Activated naive CD4-positive, alpha-beta T cell treated with anti-CD3 and anti-CD28 coated beads, Interleukin-2, amount 10 ng/mL, durations not matched to agents 7 days and 5 days (primary cell): ENCODE measurements at regions of chr6 and their contacts with region 1.

Region 1: GRCh38 chr6:16964553-16965501 is 137.0 kb upstream of the STMND1 start:
- DNase-seq: peak; percentile 71
- H3K4me3 Mint-ChIP-seq: no peak overlapping the region
- H3K27ac Mint-ChIP-seq: no peak overlapping the region
- H3K4me1 Mint-ChIP-seq: peaks cover 3% of the 10 kb centered on the region
- H3K27me3 Mint-ChIP-seq: peaks cover 21% of the 10 kb centered on the region

Region 2: DNA sequence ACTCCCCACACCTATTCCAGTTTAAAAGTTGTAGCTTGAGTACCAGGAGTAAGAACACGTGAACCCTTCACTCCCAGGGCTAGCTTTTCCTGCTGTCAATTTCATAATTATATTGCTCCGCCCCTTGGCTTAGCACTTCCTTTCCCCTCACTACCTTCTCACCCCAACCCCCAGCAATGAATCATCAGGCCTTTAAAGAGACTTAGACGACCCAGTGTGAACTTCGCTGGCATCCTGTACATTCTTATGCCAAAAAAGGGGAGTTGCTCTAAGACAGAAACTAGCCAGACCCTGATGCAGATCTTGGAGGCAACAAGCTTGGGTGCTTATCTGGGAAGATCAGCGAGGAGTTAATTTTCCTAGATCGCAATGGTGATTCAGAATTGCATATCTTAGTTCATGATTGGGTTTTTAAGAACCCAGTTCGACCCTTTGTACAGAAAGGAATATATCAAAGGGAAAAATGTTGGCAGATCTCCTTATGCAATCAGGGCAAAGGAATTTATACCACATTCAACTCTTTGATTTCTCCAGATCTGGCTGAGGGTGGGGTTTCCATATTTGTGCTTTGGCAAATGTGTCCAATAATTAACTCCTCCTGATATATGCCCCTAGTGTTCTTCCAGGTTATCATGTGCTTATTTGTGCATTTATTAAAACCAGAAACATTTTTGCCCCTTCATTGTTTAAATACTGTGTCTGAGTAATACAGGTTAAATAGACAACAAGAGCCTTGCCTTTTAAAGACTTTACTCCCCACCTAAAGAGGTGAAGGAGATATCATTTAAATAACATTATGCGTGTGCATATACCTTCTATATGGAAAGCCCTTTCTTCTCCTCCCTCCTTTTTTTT is 195.5 kb before region 1 on chr6:
- CTCF ChIA-PET with region 1: interaction called, 31 read pairs
- DNase-seq: peak; percentile 74
- H3K4me3 Mint-ChIP-seq: no peak overlapping the region
- H3K27ac Mint-ChIP-seq: peak overlapping the region; percentile 33
- H3K4me1 Mint-ChIP-seq: peaks cover 69% of the 10 kb centered on the region
- H3K27me3 Mint-ChIP-seq: peaks cover 4% of the 10 kb centered on the region

Region 3: GRCh38 chr6:16933532-16933931 is 31.3 kb before region 1 on chr6:
- CTCF ChIA-PET with region 1: no interaction called
- DNase-seq: no peak
- H3K4me3 Mint-ChIP-seq: no peak overlapping the region
- H3K27ac Mint-ChIP-seq: no peak overlapping the region
- H3K4me1 Mint-ChIP-seq: no peaks in the 10 kb centered on the region
- H3K27me3 Mint-ChIP-seq: peaks cover 13% of the 10 kb centered on the region

Region 4: DNA sequence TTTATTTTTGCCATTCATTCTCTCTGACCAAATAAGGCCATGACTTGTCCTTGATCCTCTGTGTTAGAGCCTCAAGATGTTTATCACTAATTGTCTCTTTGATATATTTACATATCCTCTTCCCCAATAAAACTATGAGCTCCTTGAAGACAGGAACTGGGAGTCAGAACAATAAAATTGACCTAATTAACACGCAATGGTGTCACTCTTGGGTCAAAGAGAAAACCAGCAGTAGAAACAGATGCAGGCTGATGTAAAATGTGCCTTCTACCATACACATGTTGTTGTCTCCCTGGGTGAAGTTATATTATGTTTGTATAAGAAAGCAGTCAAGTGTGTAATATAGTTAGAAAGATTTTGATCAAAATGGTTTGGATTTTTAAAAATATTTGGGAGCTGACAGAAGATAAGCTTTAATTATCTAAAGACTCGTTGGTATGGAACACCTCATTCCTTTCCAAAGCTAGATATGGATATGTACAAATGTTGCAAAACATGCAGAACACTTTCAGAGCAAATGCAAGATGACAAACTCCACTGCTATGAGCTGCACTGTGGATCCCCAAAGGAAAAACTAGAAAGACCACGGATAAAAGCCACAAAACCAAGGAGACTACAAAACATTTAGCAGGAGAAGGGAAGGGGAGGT is 27.3 kb after region 1 on chr6:
- CTCF ChIA-PET with region 1: no interaction called
- DNase-seq: no peak
- H3K4me3 Mint-ChIP-seq: no peak overlapping the region
- H3K27ac Mint-ChIP-seq: no peak overlapping the region
- H3K4me1 Mint-ChIP-seq: no peaks in the 10 kb centered on the region
- H3K27me3 Mint-ChIP-seq: peaks cover 7% of the 10 kb centered on the region

Region 5: GRCh38 chr6:17138033-17138432 is 173.2 kb after region 1 on chr6:
- CTCF ChIA-PET with region 1: no interaction called
- DNase-seq: no peak
- H3K4me3 Mint-ChIP-seq: no peak overlapping the region
- H3K27ac Mint-ChIP-seq: no peak overlapping the region
- H3K4me1 Mint-ChIP-seq: no peaks in the 10 kb centered on the region
- H3K27me3 Mint-ChIP-seq: no peaks in the 10 kb centered on the region